Sciatic nerve (tissue), 2 donors: ENCODE measurements at regions of chr17 and their contacts with region 1.

Region 1: DNA sequence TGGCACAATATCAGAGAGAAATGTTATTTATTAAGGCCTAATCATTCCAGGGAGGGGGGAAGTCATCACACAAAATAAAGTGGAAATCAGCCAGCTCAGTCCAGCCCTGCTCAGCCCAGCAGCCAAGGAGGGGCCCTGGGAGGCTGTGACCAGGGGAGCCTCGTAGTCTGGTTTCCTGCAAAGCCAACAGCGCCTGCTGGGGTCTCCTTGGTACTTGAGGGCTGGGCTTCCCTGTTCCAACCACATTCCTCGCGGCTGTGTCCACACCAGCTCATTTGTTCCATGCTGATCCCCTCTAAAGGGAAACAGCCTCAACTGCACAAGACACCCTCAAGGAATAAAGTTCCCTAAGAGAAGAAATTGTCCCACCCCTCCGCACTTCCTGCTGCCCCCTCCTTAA is 154.0 kb downstream of the TMEM132E start:
- DNase-seq: peak; percentile 10
- ATAC-seq: no peak

Region 2: DNA sequence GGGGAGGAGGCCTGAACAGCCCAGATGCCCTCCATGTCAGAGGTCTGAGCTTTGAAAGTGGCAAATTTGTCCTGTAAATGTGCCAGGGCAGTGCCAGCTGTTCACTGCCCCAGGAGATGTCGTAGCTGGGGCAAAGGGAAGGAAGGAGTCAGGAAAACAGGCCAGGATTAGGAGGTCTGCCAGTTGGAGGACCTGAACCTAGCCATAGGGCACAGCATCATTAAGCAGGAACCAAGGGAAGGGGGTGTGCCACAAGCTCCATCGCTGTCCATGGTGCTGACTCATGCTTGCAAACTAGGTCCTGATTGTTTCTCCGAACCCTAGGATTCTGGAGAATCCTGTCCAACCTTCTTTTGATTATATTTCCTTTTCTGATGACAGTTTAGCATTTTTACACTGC is 29.8 kb before region 1 on chr17:
- intact Hi-C with region 1: loop called (anchors 1 kb)
- DNase-seq: no peak
- ATAC-seq: no peak